Gastrocnemius medialis (tissue), 4 donors: ENCODE measurements at regions of chr17 and their contacts with region 1.

Region 1: GRCh38 chr17:22454070-22454999 is 762.0 kb downstream of the KCNJ18 start:
- DNase-seq: no peak
- ATAC-seq: no peak
- H3K4me3 ChIP-seq: no peak overlapping the region
- H3K27ac ChIP-seq: no peak overlapping the region
- H3K4me1 ChIP-seq: no peaks in the 10 kb centered on the region
- H3K27me3 ChIP-seq: no peaks in the 10 kb centered on the region
- CTCF ChIP-seq: no peak
- POLR2A ChIP-seq: no peak

Region 2: GRCh38 chr17:22337453-22337852 is 116.9 kb before region 1 on chr17:
- in situ Hi-C with region 1: loop called in 1 of 4 experiments (anchors 25 kb)
- intact Hi-C with region 1: no loop called
- DNase-seq: no peak
- ATAC-seq: no peak
- H3K4me3 ChIP-seq: no peak overlapping the region
- H3K27ac ChIP-seq: no peak overlapping the region
- H3K4me1 ChIP-seq: no peaks in the 10 kb centered on the region
- H3K27me3 ChIP-seq: no peaks in the 10 kb centered on the region
- CTCF ChIP-seq: no peak
- POLR2A ChIP-seq: no peak